ENCODE measurements at regions of chr18 and their contacts with region 1.

Region 1: GRCh38 chr18:29096079-29096770 is 919.3 kb upstream of the CDH2 start:
- DNase-seq: no peak
- ATAC-seq: no peak
- H3K4me3 ChIP-seq: no peak overlapping the region
- H3K27ac ChIP-seq: no peak overlapping the region
- H3K4me1 ChIP-seq: no peaks in the 10 kb centered on the region
- H3K27me3 ChIP-seq: no peaks in the 10 kb centered on the region
- CTCF ChIP-seq: no peak
- EP300 ChIP-seq: no peak
- POLR2A ChIP-seq: no peak
- RAD21 ChIP-seq: no peak

Region 2: DNA sequence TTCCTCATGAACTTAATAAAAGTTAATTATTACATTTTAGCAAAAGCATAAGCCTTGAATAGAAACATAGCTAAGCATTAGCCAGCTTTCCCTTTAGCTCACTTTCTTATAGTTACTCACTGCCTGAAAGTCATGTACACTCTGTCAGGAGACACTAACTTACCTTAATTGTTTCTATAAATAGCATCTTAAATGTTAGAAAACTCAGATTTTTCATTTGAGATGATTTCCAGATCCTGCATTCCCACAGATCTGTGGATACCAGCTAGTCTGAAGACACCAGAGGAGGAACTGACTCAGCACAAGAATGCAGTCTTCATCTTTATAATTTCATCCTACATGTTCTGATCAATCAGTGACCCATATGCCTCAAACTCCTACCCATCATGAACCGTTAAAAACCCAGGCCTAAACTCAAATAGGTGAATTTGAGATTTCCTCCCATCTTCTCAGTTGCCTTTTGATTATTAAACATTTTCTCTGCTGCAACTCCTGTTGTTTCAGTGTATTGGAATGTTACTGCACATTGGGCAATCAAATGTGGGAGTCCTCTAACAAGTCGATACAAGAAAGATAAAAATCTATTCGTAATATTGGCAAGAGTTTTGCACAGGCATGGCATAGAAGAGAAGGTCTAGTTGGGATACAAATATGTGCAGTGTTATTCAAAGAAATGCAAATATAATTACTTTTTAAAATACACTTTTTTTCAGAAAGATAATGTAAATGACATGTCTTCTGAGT is 61.9 kb before region 1 on chr18:
- CTCF ChIA-PET with region 1: no interaction called
- POLR2A ChIA-PET with region 1: no interaction called
- RAD21 ChIA-PET with region 1: no interaction called
- SMC1A ChIA-PET with region 1: no interaction called
- in situ Hi-C with region 1: no loop called
- intact Hi-C with region 1: no loop called
- DNase-seq: no peak
- ATAC-seq: no peak
- H3K4me3 ChIP-seq: no peak overlapping the region
- H3K27ac ChIP-seq: no peak overlapping the region
- H3K4me1 ChIP-seq: no peaks in the 10 kb centered on the region
- H3K27me3 ChIP-seq: no peaks in the 10 kb centered on the region
- CTCF ChIP-seq: no peak
- EP300 ChIP-seq: no peak
- POLR2A ChIP-seq: no peak
- RAD21 ChIP-seq: no peak

Region 3: GRCh38 chr18:29071869-29072268 is 24.4 kb before region 1 on chr18:
- CTCF ChIA-PET with region 1: no interaction called
- POLR2A ChIA-PET with region 1: no interaction called
- RAD21 ChIA-PET with region 1: no interaction called
- SMC1A ChIA-PET with region 1: no interaction called
- in situ Hi-C with region 1: no loop called
- intact Hi-C with region 1: no loop called
- DNase-seq: no peak
- ATAC-seq: no peak
- H3K4me3 ChIP-seq: no peak overlapping the region
- H3K27ac ChIP-seq: no peak overlapping the region
- H3K4me1 ChIP-seq: no peaks in the 10 kb centered on the region
- H3K27me3 ChIP-seq: no peaks in the 10 kb centered on the region
- CTCF ChIP-seq: no peak
- EP300 ChIP-seq: no peak
- POLR2A ChIP-seq: no peak
- RAD21 ChIP-seq: no peak

Region 4: GRCh38 chr18:29123706-29124530 is 27.7 kb after region 1 on chr18:
- CTCF ChIA-PET with region 1: no interaction called
- POLR2A ChIA-PET with region 1: no interaction called
- RAD21 ChIA-PET with region 1: no interaction called
- SMC1A ChIA-PET with region 1: no interaction called
- in situ Hi-C with region 1: no loop called
- intact Hi-C with region 1: loop called (anchors 2 kb)
- DNase-seq: no peak
- ATAC-seq: no peak
- H3K4me3 ChIP-seq: no peak overlapping the region
- H3K27ac ChIP-seq: no peak overlapping the region
- H3K4me1 ChIP-seq: no peaks in the 10 kb centered on the region
- H3K27me3 ChIP-seq: no peaks in the 10 kb centered on the region
- CTCF ChIP-seq: no peak
- EP300 ChIP-seq: no peak
- POLR2A ChIP-seq: no peak
- RAD21 ChIP-seq: no peak

Measured in GM12878 (cell line).